GM10248 (cell line): ENCODE measurements at regions of chr5 and their contacts with region 1.

Region 1: GRCh38 chr5:151126199-151126645 is 31.4 kb downstream of the ANXA6 start:
- DNase-seq: peak; percentile 73
- CTCF ChIP-seq: peak; percentile 94

Region 2: DNA sequence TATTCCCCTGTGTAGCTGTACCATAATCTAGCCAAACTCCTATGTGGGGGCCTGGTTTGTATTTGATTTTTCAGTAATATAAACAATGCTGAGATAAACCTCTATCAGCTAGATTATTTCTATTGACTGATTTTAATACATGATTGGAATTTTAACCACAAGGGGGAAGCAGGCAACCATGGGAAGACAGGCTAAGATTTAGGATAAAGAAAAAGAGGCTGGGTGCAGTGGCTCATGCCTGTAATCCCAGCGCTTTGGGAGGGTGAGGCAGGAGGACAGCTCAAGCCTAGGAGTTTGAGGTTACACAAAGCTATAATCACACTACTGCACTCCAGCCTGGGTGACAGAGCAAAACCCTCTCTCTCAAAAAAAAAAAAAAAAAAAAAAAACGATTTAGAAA is 124.0 kb before region 1 on chr5:
- CTCF ChIA-PET with region 1: no interaction called
- POLR2A ChIA-PET with region 1: no interaction called
- DNase-seq: no peak
- CTCF ChIP-seq: no peak

Region 3: DNA sequence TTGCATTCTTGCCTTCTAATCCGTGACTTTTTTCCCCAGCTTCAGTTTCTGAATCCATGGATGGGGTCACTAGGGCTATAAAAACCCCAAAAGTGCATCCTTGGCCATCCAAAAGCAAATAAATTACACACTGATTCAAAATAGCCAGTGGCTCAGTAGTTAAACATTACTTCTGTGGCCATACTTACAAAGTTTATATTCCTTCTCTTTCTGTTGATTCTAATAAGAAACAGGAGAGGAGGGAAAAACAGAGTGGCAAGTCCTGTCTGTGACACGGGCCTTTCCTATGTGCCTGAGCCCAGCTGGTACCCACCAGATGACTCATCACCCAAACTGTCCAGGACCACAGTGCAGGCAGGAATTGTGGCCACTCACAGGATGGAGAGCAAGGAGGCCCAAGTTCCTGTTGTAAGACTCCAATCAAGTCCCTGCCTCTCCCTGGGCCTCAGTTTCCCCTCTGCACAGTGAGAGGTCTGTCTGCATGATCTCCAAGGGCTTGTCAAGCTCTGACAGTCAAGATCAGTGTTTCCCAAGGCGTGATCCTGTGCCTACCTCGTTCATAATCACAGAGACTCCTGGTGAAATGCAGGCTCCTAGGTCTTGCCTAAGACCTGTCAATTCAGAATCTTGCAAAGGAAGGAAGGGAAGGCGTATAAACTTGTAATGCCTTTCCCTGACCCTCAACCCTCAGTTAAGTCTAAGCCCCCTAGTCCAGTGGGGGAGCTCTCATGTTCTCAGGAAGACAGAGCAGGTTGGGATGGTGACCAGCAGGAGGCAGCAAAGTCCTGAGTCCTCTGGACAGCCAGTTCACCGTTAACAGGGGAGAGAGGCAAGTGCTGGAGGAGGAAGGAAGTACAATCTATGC is 74.9 kb before region 1 on chr5:
- CTCF ChIA-PET with region 1: interaction called, 73 read pairs
- POLR2A ChIA-PET with region 1: interaction called, 3 read pairs
- DNase-seq: peak; percentile 79
- CTCF ChIP-seq: peak; percentile 76

Region 4: GRCh38 chr5:151093476-151093889 is 32.7 kb before region 1 on chr5:
- CTCF ChIA-PET with region 1: interaction called, 32 read pairs
- POLR2A ChIA-PET with region 1: no interaction called
- DNase-seq: no peak
- CTCF ChIP-seq: no peak

Region 5: DNA sequence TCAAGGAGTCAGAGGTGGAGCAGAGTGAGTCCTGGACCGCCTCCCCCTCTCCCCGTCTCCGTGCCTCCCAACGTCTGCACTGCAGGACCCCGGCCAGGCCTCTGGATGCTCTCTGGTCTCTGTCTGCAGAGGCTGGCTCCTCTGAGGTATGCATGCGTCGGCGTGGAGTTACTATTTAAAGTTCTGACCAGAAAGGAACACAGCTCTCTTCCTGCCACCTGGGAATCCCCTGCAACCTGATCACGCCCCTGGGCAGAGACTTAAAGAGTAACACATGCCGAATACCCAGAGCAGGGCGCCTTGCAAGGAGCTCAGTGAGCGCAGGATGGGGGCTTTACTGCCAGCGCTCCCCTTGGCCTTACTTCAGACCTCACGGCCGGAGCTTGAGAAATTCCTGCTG is 15.3 kb after region 1 on chr5:
- CTCF ChIA-PET with region 1: interaction called, 221 read pairs
- POLR2A ChIA-PET with region 1: interaction called, 10 read pairs
- DNase-seq: peak; percentile 84
- CTCF ChIP-seq: no peak

Region 6: GRCh38 chr5:151164686-151165392 is 38.6 kb after region 1 on chr5:
- CTCF ChIA-PET with region 1: interaction called, 304 read pairs
- POLR2A ChIA-PET with region 1: interaction called, 6 read pairs
- DNase-seq: peak; percentile 76
- CTCF ChIP-seq: peak; percentile 93

Region 7: GRCh38 chr5:151264113-151264512 is 137.9 kb after region 1 on chr5:
- CTCF ChIA-PET with region 1: no interaction called
- POLR2A ChIA-PET with region 1: no interaction called
- DNase-seq: no peak
- CTCF ChIP-seq: no peak

Region 8: GRCh38 chr5:151315998-151316597 is 189.9 kb after region 1 on chr5:
- CTCF ChIA-PET with region 1: interaction called, 39 read pairs
- POLR2A ChIA-PET with region 1: no interaction called
- DNase-seq: peak; percentile 80
- CTCF ChIP-seq: peak; percentile 95